Right lobe of liver (tissue), 6 donors: ENCODE measurements at regions of chr6 and their contacts with region 1.

Region 1: GRCh38 chr6:163427498-163428254 is 13.2 kb downstream of the QKI start:
- DNase-seq: no peak
- ATAC-seq: peak; percentile 66 to 78 (median 76)
- H3K4me3 ChIP-seq: no peak overlapping the region
- H3K27ac ChIP-seq: no peak overlapping the region
- H3K4me1 ChIP-seq: peaks cover 2 to 76% (median 27%) of the 10 kb centered on the region in 4 donors
- H3K27me3 ChIP-seq: no peaks in the 10 kb centered on the region
- CTCF ChIP-seq: peak; percentile 42 to 62 (median 56)
- POLR2A ChIP-seq: no peak

Region 2: DNA sequence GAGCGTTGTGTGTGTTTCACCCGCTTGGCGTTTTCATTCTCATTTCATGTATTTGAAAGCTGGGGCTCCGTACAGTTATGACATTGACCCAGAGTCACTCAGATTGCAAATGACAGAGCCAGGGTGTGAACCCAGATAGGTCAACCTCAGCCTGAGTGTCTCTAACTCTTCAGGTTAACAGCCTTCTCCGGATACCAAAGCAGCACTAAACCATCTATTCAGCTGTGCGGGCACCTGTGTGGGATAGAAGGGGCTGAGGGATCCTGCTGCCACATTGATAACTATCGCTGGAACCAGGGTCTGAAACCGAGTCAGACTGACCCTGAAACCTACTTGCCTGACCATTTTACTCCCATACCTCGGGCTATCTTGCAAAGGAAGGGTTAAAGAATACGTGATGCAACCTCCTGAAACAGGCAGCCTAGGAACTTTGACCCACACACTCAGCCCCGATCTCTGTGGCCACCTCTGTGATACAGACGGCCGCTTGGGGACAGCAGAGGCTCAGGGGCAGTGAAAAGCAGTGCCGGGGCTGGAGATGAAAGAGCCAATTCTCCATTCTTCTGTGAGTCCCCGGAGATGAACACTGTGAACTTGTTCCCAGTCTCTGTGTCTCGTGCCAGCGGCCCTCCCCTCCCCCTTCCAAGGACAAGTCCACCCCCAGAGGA is 246.7 kb before region 1 on chr6:
- intact Hi-C with region 1: loop called in 1 of 2 experiments (anchors 10 kb)
- DNase-seq: peak; percentile 87 to 92 (median 89)
- ATAC-seq: peak; percentile 99 to 100 (median 99)
- H3K4me3 ChIP-seq: peak overlapping the region; percentile 39 to 50 (median 40)
- H3K27ac ChIP-seq: peak overlapping the region; percentile 18 to 61 (median 59)
- H3K4me1 ChIP-seq: peaks cover 0 to 9% (median 0%) of the 10 kb centered on the region in 4 donors
- H3K27me3 ChIP-seq: no peaks in the 10 kb centered on the region
- CTCF ChIP-seq: peak; percentile 84 to 96 (median 88)
- POLR2A ChIP-seq: no peak

Region 3: DNA sequence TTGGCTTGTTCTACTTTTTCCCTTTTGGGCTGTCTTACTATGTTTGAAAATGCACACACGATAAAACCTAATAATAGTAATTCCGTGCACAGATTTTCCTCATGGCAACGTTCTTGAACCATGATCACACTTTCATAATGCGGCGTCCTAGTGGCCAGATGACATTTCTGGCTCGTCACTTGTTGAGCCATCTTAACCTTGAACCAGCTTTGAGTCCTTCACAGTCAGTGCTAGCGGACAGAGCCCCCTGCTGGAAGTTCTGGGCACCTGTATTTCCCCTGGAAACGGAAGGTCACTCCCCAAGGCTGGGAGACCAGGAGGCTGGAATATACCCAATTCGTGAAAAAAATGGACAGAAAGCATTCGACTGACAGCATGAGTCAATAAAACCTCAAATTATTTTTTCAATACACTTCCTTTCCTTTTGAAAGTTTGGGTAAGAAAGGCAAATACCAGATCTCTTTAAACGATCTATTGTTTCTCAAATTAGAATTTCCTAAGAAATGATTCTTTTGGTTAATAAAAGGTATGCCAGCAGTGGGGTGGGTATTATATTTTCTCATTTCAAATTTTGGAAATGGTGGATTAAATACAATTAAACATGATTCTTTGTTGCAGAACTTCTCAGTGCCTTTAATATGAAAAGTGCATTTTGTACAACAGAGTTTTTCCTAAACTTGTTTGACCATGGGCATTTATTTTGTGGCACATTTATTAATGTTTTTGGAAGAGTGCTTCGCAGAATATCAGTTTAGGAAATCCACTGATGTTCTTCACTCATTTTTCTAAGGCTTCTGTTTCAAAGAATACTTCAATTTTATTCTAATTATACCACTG is 529.1 kb after region 1 on chr6:
- intact Hi-C with region 1: loop called in 1 of 2 experiments (anchors 10 kb)
- DNase-seq: peak; percentile 77 to 88 (median 83)
- ATAC-seq: peak; percentile 99 to 100 (median 100)
- H3K4me3 ChIP-seq: no peak overlapping the region
- H3K27ac ChIP-seq: no peak overlapping the region
- H3K4me1 ChIP-seq: no peaks in the 10 kb centered on the region
- H3K27me3 ChIP-seq: no peaks in the 10 kb centered on the region
- CTCF ChIP-seq: peak; percentile 93 to 96 (median 94)
- POLR2A ChIP-seq: no peak